AG04450 (cell line): ENCODE measurements at regions of chr12 and their contacts with region 1.

Region 1: GRCh38 chr12:27821259-27821973 is 41.4 kb upstream of the MANSC4 start:
- DNase-seq: peak; percentile 56
- H3K4me3 ChIP-seq: no peak overlapping the region
- H3K27ac ChIP-seq: peak overlapping the region; percentile 22
- H3K27me3 ChIP-seq: no peaks in the 10 kb centered on the region
- CTCF ChIP-seq: peak; percentile 81

Region 2: GRCh38 chr12:27733052-27733656 is 88.3 kb before region 1 on chr12:
- CTCF ChIA-PET with region 1: interaction called, 29 read pairs
- POLR2A ChIA-PET with region 1: no interaction called
- DNase-seq: peak; percentile 4
- H3K4me3 ChIP-seq: no peak overlapping the region
- H3K27ac ChIP-seq: no peak overlapping the region
- H3K27me3 ChIP-seq: no peaks in the 10 kb centered on the region
- CTCF ChIP-seq: peak; percentile 94

Region 3: GRCh38 chr12:27787559-27787958 is 33.9 kb before region 1 on chr12:
- CTCF ChIA-PET with region 1: interaction called, 18 read pairs
- POLR2A ChIA-PET with region 1: interaction called, 8 read pairs
- DNase-seq: peak; percentile 52
- H3K4me3 ChIP-seq: no peak overlapping the region
- H3K27ac ChIP-seq: peak overlapping the region; percentile 76
- H3K27me3 ChIP-seq: no peaks in the 10 kb centered on the region
- CTCF ChIP-seq: no peak

Region 4: GRCh38 chr12:27840244-27840999 is 19.0 kb after region 1 on chr12:
- CTCF ChIA-PET with region 1: interaction called, 29 read pairs
- POLR2A ChIA-PET with region 1: no interaction called
- DNase-seq: no peak
- H3K4me3 ChIP-seq: no peak overlapping the region
- H3K27ac ChIP-seq: no peak overlapping the region
- H3K27me3 ChIP-seq: no peaks in the 10 kb centered on the region
- CTCF ChIP-seq: peak; percentile 53

Region 5: GRCh38 chr12:27940756-27941402 is 119.5 kb after region 1 on chr12:
- CTCF ChIA-PET with region 1: interaction called, 20 read pairs
- POLR2A ChIA-PET with region 1: no interaction called
- DNase-seq: peak; percentile 47
- H3K4me3 ChIP-seq: no peak overlapping the region
- H3K27ac ChIP-seq: no peak overlapping the region
- H3K27me3 ChIP-seq: no peaks in the 10 kb centered on the region
- CTCF ChIP-seq: peak; percentile 93